ENCODE measurements at regions of chr12 and their contacts with region 1.

Region 1: DNA sequence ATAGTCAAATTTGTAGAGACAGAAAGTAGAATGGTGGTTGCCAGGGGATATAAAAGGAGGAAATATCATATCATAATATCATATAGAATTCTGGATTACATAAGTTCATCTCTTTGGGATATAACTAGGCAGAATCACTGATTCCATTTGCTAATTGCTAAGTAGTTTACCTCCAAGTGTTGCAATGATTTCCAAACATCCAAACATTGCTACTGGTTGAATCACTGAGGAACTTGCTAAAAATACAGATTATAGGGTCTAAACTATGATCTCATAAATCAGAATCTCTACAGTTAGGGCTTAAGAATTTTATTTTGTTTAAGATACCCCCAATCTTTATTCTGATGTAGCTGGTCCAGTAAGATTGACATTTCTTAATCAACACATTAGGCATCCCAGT is 16.1 kb upstream of the TAS2R42 start:
- DNase-seq: no peak
- H3K4me3 ChIP-seq: no peak overlapping the region
- CTCF ChIP-seq: no peak

Region 2: DNA sequence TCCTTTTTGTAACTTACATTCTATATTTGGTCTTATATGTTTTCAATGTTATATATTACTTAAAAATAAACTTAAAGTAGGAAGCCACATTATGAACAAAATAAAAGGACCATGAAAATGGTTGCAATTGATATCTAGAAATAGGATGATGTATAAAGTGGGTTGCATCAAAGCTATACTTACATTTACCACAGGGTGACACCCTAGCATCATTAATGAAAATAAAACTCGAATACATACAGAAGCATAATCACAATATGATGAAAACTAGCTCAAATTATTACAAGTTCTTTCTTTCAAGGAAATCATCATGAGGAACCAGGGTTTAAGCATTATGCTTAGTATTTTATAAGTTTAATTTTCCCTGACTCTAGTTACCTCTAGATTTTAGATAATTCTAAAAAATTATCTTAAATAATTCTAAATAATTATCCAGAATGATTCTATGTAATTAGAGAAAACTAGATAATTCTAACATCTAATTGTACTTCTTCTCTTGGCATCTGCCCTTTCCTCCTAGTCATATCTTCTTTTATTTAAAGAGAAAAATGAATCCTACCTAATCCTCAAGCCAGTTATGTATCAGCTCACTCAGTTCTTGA is 431.6 kb before region 1 on chr12:
- CTCF ChIA-PET with region 1: interaction called, 167 read pairs
- POLR2A ChIA-PET with region 1: no interaction called
- DNase-seq: no peak
- H3K4me3 ChIP-seq: no peak overlapping the region
- CTCF ChIP-seq: peak; percentile 44

Region 3: DNA sequence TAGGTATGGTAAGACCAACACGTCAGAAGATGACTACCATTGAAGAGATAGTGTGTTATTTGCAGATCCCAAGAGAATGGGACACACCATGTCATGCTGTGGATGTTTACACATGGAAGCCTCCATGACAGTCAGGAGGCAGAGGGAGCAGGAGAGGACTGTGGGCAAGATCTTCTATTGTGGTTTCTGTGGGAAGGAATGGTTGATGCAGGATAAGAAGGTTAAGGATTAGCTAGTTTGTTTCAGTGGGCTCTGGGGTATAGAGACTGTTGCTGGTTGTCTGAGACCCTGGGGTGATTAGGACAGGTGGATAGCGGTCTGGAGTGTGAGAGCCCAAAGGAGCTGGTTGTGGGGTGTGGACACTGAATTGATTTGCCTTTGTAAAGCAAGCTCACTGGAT is 423.7 kb before region 1 on chr12:
- CTCF ChIA-PET with region 1: interaction called, 167 read pairs
- POLR2A ChIA-PET with region 1: no interaction called
- DNase-seq: no peak
- H3K4me3 ChIP-seq: no peak overlapping the region
- CTCF ChIP-seq: no peak

Region 4: DNA sequence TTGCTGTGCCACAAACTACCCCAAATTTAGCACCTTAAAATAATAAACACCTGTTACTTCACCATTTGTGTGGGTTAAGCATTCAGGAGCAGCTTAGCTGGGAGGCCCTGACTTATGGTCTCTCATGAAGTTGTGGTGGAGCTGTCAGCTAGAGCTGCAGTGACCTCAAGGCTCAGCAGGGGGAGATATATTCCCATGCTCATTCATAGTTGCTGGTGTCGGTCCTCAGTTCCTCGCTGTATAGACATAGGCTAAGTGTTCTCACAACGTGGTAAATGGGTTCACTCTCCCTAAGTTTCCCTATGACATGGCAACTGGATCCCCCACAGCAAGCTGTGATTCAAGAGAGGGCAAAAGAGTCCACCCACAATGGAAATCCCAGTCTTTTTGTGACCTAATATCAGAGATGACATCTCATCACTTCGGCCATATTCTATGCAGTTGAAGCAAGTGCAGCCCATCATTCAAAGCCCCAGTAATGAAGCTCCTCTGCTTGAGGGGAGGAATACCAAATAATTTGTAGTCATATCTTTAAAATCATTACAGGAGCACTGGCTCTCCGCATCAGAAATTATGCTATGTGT is 25.6 kb after region 1 on chr12:
- CTCF ChIA-PET with region 1: no interaction called
- POLR2A ChIA-PET with region 1: no interaction called
- DNase-seq: no peak
- H3K4me3 ChIP-seq: no peak overlapping the region
- CTCF ChIP-seq: peak; percentile 67

Measured in AG04449 (cell line).